ENCODE measurements at regions of chr1 and their contacts with region 1.

Region 1: DNA sequence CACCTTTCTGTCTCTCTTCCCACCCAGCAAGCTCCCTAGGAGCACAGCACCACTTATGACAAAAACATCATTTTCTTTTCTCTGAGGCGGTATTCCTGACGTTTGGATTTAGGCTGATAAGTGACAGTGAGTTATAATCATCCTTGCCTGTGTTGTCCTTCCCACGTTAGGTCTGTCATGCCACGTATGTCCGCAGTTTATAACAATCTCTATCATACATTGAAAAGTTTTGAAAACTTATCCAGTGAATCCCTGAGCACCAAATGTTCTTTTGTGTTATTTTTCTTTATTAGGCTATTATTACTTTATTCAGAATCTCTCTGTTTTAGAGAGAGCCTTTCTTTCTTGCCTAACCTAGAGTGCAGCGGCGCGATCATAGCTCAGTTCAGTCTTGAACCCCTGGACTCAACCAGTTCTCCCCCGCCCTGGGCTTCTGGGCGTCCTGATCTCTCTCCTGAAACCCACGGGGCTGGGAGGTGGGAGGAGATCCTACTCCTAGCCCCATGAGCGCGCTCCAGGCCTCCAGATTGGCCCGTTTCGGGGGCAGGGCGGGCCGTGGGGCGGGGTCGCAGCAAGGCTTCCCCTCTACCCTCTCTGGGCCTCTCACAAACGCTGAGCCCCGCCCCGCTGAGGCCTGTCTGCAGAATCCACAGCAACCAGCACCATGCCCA is at the start of gene GSTM2:
- DNase-seq: peak; percentile 96
- H3K4me3 Mint-ChIP-seq: peak within 1 kb of the TSS; percentile 73
- H3K27ac Mint-ChIP-seq: peak within 1 kb of the TSS; percentile 52
- H3K4me1 Mint-ChIP-seq: peaks cover 24% of the 10 kb centered on the region
- H3K27me3 Mint-ChIP-seq: no peaks in the 10 kb centered on the region
- total RNA-seq, gene GSTM2: 17.5 and 18.4 TPM in 2 replicates

Region 2: GRCh38 chr1:109655601-109656519 is 11.7 kb before region 1 on chr1 and contains the start of gene GSTM4:
- intact Hi-C with region 1: loop called (anchors 1 kb)
- DNase-seq: peak; percentile 92
- H3K4me3 Mint-ChIP-seq: peak within 1 kb of the TSS; percentile 96
- H3K27ac Mint-ChIP-seq: peak within 1 kb of the TSS; percentile 89
- H3K4me1 Mint-ChIP-seq: peaks cover 19% of the 10 kb centered on the region
- H3K27me3 Mint-ChIP-seq: peaks cover 28% of the 10 kb centered on the region
- total RNA-seq, gene GSTM4: 6.8 and 9.9 TPM in 2 replicates

Region 3: DNA sequence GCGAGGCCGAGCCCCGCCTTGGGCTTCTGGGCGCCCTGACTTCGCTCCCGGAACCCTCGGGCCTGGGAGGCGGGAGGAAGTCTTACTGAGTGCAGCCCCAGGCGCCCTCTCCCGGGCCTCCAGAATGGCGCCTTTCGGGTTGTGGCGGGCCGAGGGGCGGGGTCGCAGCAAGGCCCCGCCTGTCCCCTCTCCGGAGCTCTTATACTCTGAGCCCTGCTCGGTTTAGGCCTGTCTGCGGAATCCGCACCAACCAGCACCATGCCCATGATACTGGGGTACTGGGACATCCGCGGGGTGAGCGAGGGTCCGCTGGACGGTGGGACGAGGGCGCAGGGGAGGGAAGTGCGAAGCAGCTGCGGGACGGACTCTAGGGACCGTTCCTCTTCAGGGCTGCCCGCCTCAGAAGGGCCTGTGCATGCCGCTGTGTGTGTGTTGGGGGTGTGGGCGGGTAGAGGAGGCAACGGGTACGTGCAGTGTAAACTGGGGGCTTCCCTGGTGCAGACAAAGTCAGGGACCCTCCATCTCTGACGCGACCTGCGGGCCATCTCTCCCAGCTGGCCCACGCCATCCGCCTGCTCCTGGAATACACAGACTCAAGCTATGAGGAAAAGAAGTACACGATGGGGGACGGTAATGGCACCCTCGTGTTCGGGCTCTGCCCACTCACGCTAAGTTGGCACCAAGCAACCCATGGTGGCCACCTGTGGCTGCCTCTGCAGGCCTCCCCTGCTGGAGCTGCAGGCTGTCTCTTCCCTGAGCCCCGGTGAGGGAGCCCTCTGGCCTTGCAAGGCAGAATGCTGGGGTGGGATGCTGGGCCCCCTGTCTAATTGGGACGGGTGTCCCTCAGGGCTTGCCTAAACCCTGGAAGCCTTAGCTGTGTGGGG is 20.3 kb after region 1 on chr1 and contains the start of gene GSTM1:
- intact Hi-C with region 1: loop called (anchors 2 kb)
- DNase-seq: peak; percentile 97
- H3K4me3 Mint-ChIP-seq: peak within 1 kb of the TSS; percentile 87
- H3K27ac Mint-ChIP-seq: peak within 1 kb of the TSS; percentile 94
- H3K4me1 Mint-ChIP-seq: peaks cover 22% of the 10 kb centered on the region
- H3K27me3 Mint-ChIP-seq: no peaks in the 10 kb centered on the region
- total RNA-seq, gene GSTM1: 92.2 and 94.2 TPM in 2 replicates

Region 4: GRCh38 chr1:109718491-109718890 is 50.9 kb after region 1 on chr1:
- intact Hi-C with region 1: no loop called
- DNase-seq: no peak
- H3K4me3 Mint-ChIP-seq: no peak overlapping the region
- H3K27ac Mint-ChIP-seq: no peak overlapping the region
- H3K4me1 Mint-ChIP-seq: peaks cover 3% of the 10 kb centered on the region
- H3K27me3 Mint-ChIP-seq: peaks cover 3% of the 10 kb centered on the region

Region 5: GRCh38 chr1:110130113-110130596 is 462.6 kb after region 1 on chr1:
- intact Hi-C with region 1: no loop called
- DNase-seq: no peak
- H3K4me3 Mint-ChIP-seq: no peak overlapping the region
- H3K27ac Mint-ChIP-seq: no peak overlapping the region
- H3K4me1 Mint-ChIP-seq: no peaks in the 10 kb centered on the region
- H3K27me3 Mint-ChIP-seq: peaks cover 42% of the 10 kb centered on the region

Measured in activated CD4-positive, alpha-beta T cell treated with anti-CD3 and anti-CD28 coated beads, Interleukin-2, amount 10 ng/mL, durations not matched to agents 24 days and 14 days (primary cell).